SK-N-SH (cell line): ENCODE measurements at regions of chr12 and their contacts with region 1.

Region 1: DNA sequence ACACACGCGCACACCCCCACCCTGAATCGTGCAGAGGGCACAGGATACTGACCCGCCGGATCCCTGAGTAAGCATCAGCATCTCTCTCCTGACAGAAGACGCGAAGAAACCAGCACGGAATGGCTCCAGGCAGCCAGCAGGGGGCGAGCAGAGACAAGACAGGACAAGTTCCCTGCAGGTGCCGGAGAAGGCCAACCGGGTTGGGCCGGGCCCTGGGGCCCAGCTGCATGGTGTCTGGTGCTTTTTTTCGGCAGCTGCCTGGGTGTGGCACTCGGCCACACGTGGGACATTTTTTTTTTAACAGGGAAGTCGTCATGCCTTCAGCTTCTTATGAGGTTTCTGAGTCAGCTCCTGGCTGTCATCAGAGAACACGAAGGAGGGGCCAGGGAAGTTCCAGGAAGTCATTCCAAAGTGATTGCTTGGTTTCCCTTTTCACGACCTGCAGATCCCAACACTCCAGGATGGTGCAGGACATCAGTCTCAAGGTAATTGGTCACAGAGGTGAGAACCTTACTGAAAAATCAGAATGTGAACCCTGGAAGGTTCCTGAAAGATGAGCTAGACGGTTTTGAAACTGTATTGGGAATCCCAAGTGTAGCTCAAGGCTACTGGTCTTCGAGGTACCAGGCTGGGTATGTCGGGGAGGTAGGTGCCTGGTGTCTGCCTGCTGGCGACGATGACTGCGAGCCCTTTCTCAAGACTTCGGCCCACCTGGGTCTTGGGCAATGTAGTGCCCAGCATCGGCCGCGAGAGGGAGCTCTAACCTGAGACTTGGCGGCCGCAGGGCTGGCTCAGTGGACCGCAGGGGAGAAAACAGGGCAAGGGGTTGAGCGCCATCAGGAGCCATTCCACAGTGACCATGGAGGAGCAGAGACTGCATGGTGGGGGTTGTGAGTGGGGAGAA is 190.8 kb upstream of the PRMT8 start:
- DNase-seq: peak; percentile 89
- H3K4me3 ChIP-seq: peak overlapping the region; percentile 15 to 56; a peak in 3 of 4 replicates
- H3K27ac ChIP-seq: peak overlapping the region in 1 of 2 experiments; percentile 69; a peak in 2 of 4 replicates
- H3K4me1 ChIP-seq: peaks cover 4 to 39% of the 10 kb centered on the region in 2 experiments; a peak in 3 of 4 replicates
- H3K27me3 ChIP-seq: no peaks in the 10 kb centered on the region
- CTCF ChIP-seq: peak; percentile 93
- EP300 ChIP-seq: peak in 1 of 2 experiments; percentile 51; a peak in 1 of 4 replicates
- RAD21 ChIP-seq: peak; percentile 87

Region 2: GRCh38 chr12:2812290-2813213 is 487.6 kb before region 1 on chr12 and contains the start of gene ITFG2:
- CTCF ChIA-PET with region 1: no interaction called
- POLR2A ChIA-PET with region 1: no interaction called
- DNase-seq: peak; percentile 93
- H3K4me3 ChIP-seq: peak within 1 kb of the TSS; percentile 68 to 81
- H3K27ac ChIP-seq: peak within 1 kb of the TSS; percentile 87 to 96
- H3K4me1 ChIP-seq: peaks cover 0 to 3% of the 10 kb centered on the region in 2 experiments; a peak in 1 of 4 replicates
- H3K27me3 ChIP-seq: no peaks in the 10 kb centered on the region
- CTCF ChIP-seq: no peak
- EP300 ChIP-seq: peak in 1 of 2 experiments; percentile 26; a peak in 2 of 4 replicates
- RAD21 ChIP-seq: no peak
- polyA plus RNA-seq, gene ITFG2: 27.2 and 30.1 TPM in 2 replicates

Region 3: GRCh38 chr12:2902272-2902880 is 397.8 kb before region 1 on chr12:
- CTCF ChIA-PET with region 1: no interaction called
- POLR2A ChIA-PET with region 1: no interaction called
- DNase-seq: peak; percentile 68
- H3K4me3 ChIP-seq: no peak overlapping the region
- H3K27ac ChIP-seq: peak overlapping the region in 1 of 2 experiments; percentile 16; a peak in 1 of 4 replicates
- H3K4me1 ChIP-seq: peaks cover 0 to 6% of the 10 kb centered on the region in 2 experiments; a peak in 2 of 4 replicates
- H3K27me3 ChIP-seq: no peaks in the 10 kb centered on the region
- CTCF ChIP-seq: no peak
- EP300 ChIP-seq: peak in 1 of 2 experiments; percentile 63; a peak in 1 of 4 replicates
- RAD21 ChIP-seq: no peak

Region 4: DNA sequence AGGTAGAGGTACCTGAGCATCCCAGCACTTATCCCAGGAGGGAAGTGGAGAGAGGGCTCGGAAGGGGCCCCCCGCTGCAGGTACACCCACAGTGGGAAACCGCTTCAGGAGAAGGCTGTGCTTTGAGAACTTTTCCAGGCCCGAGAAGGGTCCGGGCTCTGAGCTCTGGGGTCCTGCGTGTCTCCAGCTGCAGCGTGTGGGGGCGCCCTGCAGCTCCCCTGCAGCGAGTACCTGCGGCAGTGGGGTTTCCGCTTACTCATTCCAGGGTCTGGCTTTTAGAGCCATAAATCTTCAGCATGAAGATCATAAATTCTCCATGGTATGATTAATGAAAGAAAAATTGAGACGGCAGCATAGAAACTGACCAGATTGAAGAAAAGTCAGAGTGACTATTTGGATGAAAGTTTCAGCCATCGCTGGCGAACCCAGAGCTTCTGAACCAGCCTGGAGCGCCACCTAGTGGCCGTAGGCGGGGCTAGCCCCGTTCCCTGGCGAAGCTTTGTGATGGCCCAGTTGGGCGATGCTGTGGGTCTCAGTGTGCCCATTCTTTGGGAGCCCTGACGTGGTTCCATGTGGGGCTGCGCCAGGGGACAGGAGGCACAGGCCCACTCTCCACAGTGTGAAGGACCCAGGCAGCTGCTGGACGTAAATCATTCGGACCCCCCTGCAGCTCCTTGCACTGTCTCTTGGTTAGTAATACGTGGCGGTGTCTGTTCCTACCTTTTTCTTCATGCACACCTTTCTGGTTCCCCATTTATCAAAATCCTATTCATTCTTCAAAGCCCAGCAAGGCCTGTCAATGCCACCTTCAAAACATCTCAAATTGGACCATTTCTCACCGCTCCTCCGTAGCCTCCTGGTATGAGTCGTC is 24.8 kb before region 1 on chr12:
- CTCF ChIA-PET with region 1: interaction called, 188 read pairs
- POLR2A ChIA-PET with region 1: no interaction called
- DNase-seq: peak; percentile 91
- H3K4me3 ChIP-seq: no peak overlapping the region; a peak in 1 of 4 replicates
- H3K27ac ChIP-seq: no peak overlapping the region
- H3K4me1 ChIP-seq: peaks cover 0 to 2% of the 10 kb centered on the region in 2 experiments; a peak in 1 of 4 replicates
- H3K27me3 ChIP-seq: no peaks in the 10 kb centered on the region
- CTCF ChIP-seq: peak; percentile 97
- EP300 ChIP-seq: no peak
- RAD21 ChIP-seq: peak; percentile 98

Region 5: GRCh38 chr12:3342056-3342455 is 41.9 kb after region 1 on chr12:
- CTCF ChIA-PET with region 1: interaction called, 63 read pairs
- POLR2A ChIA-PET with region 1: no interaction called
- DNase-seq: peak; percentile 82
- H3K4me3 ChIP-seq: peak overlapping the region in 1 of 2 experiments; percentile 32; a peak in 1 of 4 replicates
- H3K27ac ChIP-seq: no peak overlapping the region
- H3K4me1 ChIP-seq: peaks cover 0 to 2% of the 10 kb centered on the region in 2 experiments; a peak in 1 of 4 replicates
- H3K27me3 ChIP-seq: peaks cover 17% of the 10 kb centered on the region; the same call in 1 of the 2 replicates
- CTCF ChIP-seq: peak; percentile 48
- EP300 ChIP-seq: no peak
- RAD21 ChIP-seq: peak; percentile 71

Region 6: DNA sequence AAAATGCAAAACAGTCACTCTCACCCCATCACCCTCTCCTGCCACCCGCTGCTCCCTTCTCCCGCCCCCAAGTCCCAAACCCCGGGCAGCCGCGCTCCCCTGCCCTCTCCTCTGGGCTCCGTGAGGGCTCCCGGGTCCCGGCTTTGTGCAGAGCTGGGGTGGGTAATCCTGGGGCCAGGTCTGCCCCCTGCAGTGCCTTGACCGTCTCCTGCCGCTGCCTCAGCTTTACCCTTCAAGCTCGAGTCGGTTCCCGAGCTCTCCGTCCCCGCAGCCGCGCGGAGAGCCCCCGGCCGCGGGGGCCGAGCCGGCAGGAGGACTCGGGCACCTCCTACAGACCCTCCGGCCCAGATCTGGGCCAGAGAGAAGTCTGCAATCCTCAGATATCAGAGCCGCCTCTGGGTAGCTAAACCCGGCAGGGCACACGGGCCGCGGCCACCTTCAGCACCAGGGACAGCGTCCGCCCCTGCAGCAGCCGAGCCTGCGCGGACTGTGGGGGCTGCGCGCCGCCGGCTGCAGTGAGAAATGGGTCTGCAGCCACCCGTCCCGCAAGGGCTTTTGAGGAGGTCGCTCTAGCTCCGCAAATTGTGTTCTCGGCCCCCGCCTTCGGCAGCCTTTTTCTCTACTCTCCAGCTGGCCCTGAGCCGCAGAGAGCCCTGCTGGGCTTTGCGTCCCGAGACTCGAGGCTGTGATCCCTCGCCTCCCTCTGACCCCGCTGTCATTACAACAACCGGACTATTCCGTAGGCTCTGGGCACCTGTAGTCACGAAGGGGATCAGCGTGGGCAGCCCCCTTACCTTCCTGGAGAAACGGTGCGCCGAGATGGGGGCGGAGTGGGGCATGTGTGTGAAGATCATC is 192.0 kb after region 1 on chr12:
- CTCF ChIA-PET with region 1: interaction called, 16 read pairs
- POLR2A ChIA-PET with region 1: no interaction called
- DNase-seq: peak; percentile 80
- H3K4me3 ChIP-seq: peak overlapping the region in 1 of 2 experiments; percentile 34; a peak in 2 of 4 replicates
- H3K27ac ChIP-seq: no peak overlapping the region
- H3K4me1 ChIP-seq: peaks cover 0 to 8% of the 10 kb centered on the region in 2 experiments; a peak in 1 of 4 replicates
- H3K27me3 ChIP-seq: peaks cover 59% of the 10 kb centered on the region
- CTCF ChIP-seq: no peak
- EP300 ChIP-seq: no peak
- RAD21 ChIP-seq: no peak

Region 7: GRCh38 chr12:3646561-3647241 is 346.5 kb after region 1 on chr12:
- CTCF ChIA-PET with region 1: interaction called, 18 read pairs
- POLR2A ChIA-PET with region 1: no interaction called
- DNase-seq: no peak
- H3K4me3 ChIP-seq: no peak overlapping the region
- H3K27ac ChIP-seq: no peak overlapping the region
- H3K4me1 ChIP-seq: peaks cover 8 to 9% of the 10 kb centered on the region in 2 experiments; a peak in 1 of 4 replicates
- H3K27me3 ChIP-seq: no peaks in the 10 kb centered on the region
- CTCF ChIP-seq: no peak
- EP300 ChIP-seq: no peak
- RAD21 ChIP-seq: no peak

Region 8: GRCh38 chr12:3704512-3705353 is 404.6 kb after region 1 on chr12:
- CTCF ChIA-PET with region 1: interaction called, 17 read pairs
- POLR2A ChIA-PET with region 1: no interaction called
- DNase-seq: no peak
- H3K4me3 ChIP-seq: no peak overlapping the region; a peak in 1 of 4 replicates
- H3K27ac ChIP-seq: no peak overlapping the region
- H3K4me1 ChIP-seq: no peaks in the 10 kb centered on the region; a peak in 3 of 4 replicates
- H3K27me3 ChIP-seq: no peaks in the 10 kb centered on the region
- CTCF ChIP-seq: no peak
- EP300 ChIP-seq: no peak
- RAD21 ChIP-seq: no peak

Region 9: GRCh38 chr12:3797531-3798049 is 497.4 kb after region 1 on chr12:
- CTCF ChIA-PET with region 1: interaction called, 56 read pairs
- POLR2A ChIA-PET with region 1: no interaction called
- DNase-seq: no peak
- H3K4me3 ChIP-seq: no peak overlapping the region
- H3K27ac ChIP-seq: no peak overlapping the region
- H3K4me1 ChIP-seq: peaks cover 0 to 3% of the 10 kb centered on the region in 2 experiments; a peak in 1 of 4 replicates
- H3K27me3 ChIP-seq: no peaks in the 10 kb centered on the region
- CTCF ChIP-seq: no peak
- EP300 ChIP-seq: no peak
- RAD21 ChIP-seq: no peak